ENCODE measurements at regions of chr15 and their contacts with region 1.

Region 1: DNA sequence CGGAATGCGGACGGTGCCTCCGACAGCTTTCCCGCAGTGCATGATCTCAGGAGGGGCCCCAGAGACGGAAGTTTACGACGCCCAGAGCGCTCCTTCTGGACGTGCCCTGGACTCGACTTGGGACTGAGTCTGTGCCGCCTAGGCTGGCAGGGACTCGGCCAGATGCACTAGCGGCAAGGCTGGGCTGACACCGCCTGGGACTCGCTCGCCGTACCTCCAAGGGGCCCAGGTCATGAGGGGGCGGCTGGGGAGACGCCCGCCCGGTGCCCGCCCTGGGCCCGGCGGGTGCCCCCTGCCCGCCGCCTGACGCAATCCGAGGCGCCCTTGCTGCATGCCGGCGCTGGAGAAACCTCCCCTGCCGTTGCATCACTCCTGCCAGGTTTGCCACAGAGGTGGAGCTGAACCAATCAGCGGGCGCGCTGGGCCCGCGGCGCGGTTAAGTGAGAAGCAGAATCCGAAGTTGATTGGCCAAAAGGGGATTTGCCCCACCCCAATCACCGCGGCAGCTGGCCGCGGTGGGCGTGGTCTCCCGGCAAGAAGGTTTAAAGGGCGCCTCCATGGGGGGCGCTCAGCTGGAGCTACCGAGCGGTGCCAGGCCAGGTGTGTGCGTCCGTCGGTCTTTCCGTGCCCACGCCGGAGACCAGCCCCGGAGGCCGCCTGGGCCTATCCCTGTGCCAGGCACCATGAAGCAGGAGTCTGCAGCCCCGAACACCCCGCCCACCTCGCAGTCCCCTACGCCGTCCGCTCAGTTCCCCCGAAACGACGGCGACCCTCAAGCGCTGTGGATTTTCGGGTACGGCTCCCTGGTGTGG is at the start of gene CHAC1:
- DNase-seq: peak; percentile 85 to 98 (median 93)
- ATAC-seq: peak; percentile 95 to 97 (median 97)
- H3K4me3 ChIP-seq: peak within 1 kb of the TSS; percentile 78 to 85
- H3K4me3 Mint-ChIP-seq: peak within 1 kb of the TSS; percentile 89 to 92 (median 89)
- H3K27ac ChIP-seq: no peak within 1 kb of the TSS
- H3K27ac Mint-ChIP-seq: peak within 1 kb of the TSS; percentile 76 to 87
- H3K4me1 ChIP-seq: peaks cover 7 to 19% of the 10 kb centered on the region in 2 experiments
- H3K4me1 Mint-ChIP-seq: peaks cover 11 to 21% (median 17%) of the 10 kb centered on the region in 3 donors
- H3K27me3 ChIP-seq: peaks cover 0 to 12% of the 10 kb centered on the region in 2 experiments
- H3K27me3 Mint-ChIP-seq: peaks cover 0 to 3% of the 10 kb centered on the region in 2 donors
- total RNA-seq, gene CHAC1: 0.44 to 7.5 (median 7.2) TPM

Region 2: GRCh38 chr15:40743921-40744814 is 208.9 kb before region 1 on chr15:
- CTCF ChIA-PET with region 1: no interaction called
- POLR2A ChIA-PET with region 1: no interaction called
- DNase-seq: peak in 34 of 35 experiments; percentile 33 to 85 (median 55)
- ATAC-seq: peak; percentile 90 to 99 (median 94)
- H3K4me3 ChIP-seq: no peak overlapping the region
- H3K4me3 Mint-ChIP-seq: no peak overlapping the region
- H3K27ac ChIP-seq: peak overlapping the region; percentile 80
- H3K27ac Mint-ChIP-seq: peak overlapping the region; percentile 91 to 93
- H3K4me1 ChIP-seq: peaks cover 0 to 22% of the 10 kb centered on the region in 2 experiments
- H3K4me1 Mint-ChIP-seq: peaks cover 0 to 22% (median 6%) of the 10 kb centered on the region in 3 donors
- H3K27me3 ChIP-seq: no peaks in the 10 kb centered on the region
- H3K27me3 Mint-ChIP-seq: no peaks in the 10 kb centered on the region

Region 3: GRCh38 chr15:40930430-40931299 is 22.4 kb before region 1 on chr15:
- CTCF ChIA-PET with region 1: interaction called in 1 of 2 experiments, 5 read pairs
- POLR2A ChIA-PET with region 1: interaction called in 1 of 2 experiments, 13 read pairs
- DNase-seq: peak in 13 of 35 experiments; percentile 25 to 62 (median 48)
- ATAC-seq: peak in 1 of 4 experiments; percentile 45
- H3K4me3 ChIP-seq: peak overlapping the region in 1 of 2 donors; percentile 78
- H3K4me3 Mint-ChIP-seq: peak overlapping the region; percentile 65 to 89 (median 67)
- H3K27ac ChIP-seq: no peak overlapping the region
- H3K27ac Mint-ChIP-seq: peak overlapping the region in 1 of 2 donors; percentile 36
- H3K4me1 ChIP-seq: peaks cover 23 to 64% of the 10 kb centered on the region in 2 experiments
- H3K4me1 Mint-ChIP-seq: peaks cover 38 to 47% (median 44%) of the 10 kb centered on the region in 3 donors
- H3K27me3 ChIP-seq: peaks cover 4 to 74% of the 10 kb centered on the region in 2 experiments
- H3K27me3 Mint-ChIP-seq: peaks cover 36 to 61% of the 10 kb centered on the region in 2 donors

Region 4: DNA sequence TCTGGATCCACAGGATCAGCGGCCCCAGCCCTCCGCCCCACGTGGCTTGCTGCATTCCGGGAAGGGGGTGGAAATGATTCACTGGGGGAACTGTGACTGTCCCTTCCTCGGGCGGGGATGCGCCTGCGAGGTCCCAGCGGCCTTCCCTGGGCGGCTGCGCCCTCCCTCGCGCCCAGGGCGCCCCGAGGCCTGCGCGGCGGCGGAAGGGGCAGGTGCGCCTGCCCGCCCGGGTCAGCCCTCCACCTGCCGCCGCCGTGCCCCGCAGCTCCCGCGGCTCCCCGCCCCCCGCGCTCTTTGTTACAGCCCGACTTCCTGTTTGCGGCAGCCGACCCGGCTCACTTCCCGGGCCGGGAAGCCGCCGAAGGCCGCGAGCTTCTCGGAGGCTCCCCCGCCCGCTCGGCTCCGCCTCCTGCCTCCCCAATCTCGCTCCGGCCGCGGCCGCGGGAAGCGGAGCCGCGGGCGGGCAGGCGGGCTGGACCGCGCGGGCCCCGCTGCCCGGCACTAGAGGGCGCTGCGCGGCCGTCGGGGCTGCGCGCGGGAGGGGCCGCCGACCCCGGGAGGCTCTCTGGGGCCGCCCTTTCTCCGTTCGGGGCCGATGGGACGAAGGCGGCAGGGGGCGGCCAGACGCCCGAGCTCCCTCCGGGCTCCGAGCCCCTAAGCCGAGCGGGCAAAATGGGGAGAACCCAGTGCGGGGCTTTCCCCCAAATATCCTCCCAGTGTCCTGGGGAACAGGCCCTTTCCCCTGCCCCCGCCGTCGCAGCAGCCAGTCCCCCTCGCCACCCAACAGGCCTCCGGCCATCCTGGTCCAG is 11.4 kb before region 1 on chr15:
- CTCF ChIA-PET with region 1: interaction called, 7 to 10 read pairs
- POLR2A ChIA-PET with region 1: interaction called in 1 of 2 experiments, 12 read pairs
- DNase-seq: peak; percentile 30 to 79 (median 55)
- ATAC-seq: peak; percentile 66 to 79 (median 74)
- H3K4me3 ChIP-seq: peak overlapping the region; percentile 62 to 89
- H3K4me3 Mint-ChIP-seq: peak overlapping the region; percentile 74 to 87 (median 80)
- H3K27ac ChIP-seq: peak overlapping the region; percentile 79
- H3K27ac Mint-ChIP-seq: peak overlapping the region; percentile 79 to 91
- H3K4me1 ChIP-seq: peaks cover 16 to 32% of the 10 kb centered on the region in 2 experiments
- H3K4me1 Mint-ChIP-seq: peaks cover 28 to 39% (median 38%) of the 10 kb centered on the region in 3 donors
- H3K27me3 ChIP-seq: peaks cover 0 to 3% of the 10 kb centered on the region in 2 experiments
- H3K27me3 Mint-ChIP-seq: no peaks in the 10 kb centered on the region

Measured in T-cell (primary cell).